ENCODE measurements at regions of chr2 and their contacts with region 1.

Region 1: GRCh38 chr2:172606285-172606684 is 50.4 kb downstream of the PDK1 start:
- DNase-seq: no peak
- H3K27ac ChIP-seq: no peak overlapping the region
- CTCF ChIP-seq: no peak

Region 2: GRCh38 chr2:172693529-172694455 is 87.5 kb after region 1 on chr2:
- CTCF ChIA-PET with region 1: no interaction called
- POLR2A ChIA-PET with region 1: interaction called, 12 read pairs
- DNase-seq: no peak
- H3K27ac ChIP-seq: peak overlapping the region; percentile 93
- CTCF ChIP-seq: no peak